Panc1 (cell line): ENCODE measurements at regions of chr2 and their contacts with region 1.

Region 1: GRCh38 chr2:202147775-202148174 is 74.7 kb downstream of the KIAA2012 start:
- DNase-seq: no peak
- ATAC-seq: peak; percentile 56; the same call in 1 of the 2 replicates
- H3K4me3 ChIP-seq: no peak overlapping the region
- H3K27ac ChIP-seq: no peak overlapping the region; the same call in 1 of the 2 replicates
- H3K4me1 ChIP-seq: peaks cover 23% of the 10 kb centered on the region; the same call in 1 of the 2 replicates
- H3K27me3 ChIP-seq: no peaks in the 10 kb centered on the region
- CTCF ChIP-seq: no peak

Region 2: GRCh38 chr2:201879996-201880395 is 267.8 kb before region 1 on chr2:
- CTCF ChIA-PET with region 1: no interaction called
- POLR2A ChIA-PET with region 1: interaction called, 10 read pairs
- in situ Hi-C with region 1: no loop called
- intact Hi-C with region 1: no loop called
- DNase-seq: no peak
- ATAC-seq: no peak
- H3K4me3 ChIP-seq: no peak overlapping the region
- H3K27ac ChIP-seq: no peak overlapping the region; the same call in 1 of the 2 replicates
- H3K4me1 ChIP-seq: peaks cover 17% of the 10 kb centered on the region; the same call in 1 of the 2 replicates
- H3K27me3 ChIP-seq: no peaks in the 10 kb centered on the region
- CTCF ChIP-seq: no peak

Region 3: DNA sequence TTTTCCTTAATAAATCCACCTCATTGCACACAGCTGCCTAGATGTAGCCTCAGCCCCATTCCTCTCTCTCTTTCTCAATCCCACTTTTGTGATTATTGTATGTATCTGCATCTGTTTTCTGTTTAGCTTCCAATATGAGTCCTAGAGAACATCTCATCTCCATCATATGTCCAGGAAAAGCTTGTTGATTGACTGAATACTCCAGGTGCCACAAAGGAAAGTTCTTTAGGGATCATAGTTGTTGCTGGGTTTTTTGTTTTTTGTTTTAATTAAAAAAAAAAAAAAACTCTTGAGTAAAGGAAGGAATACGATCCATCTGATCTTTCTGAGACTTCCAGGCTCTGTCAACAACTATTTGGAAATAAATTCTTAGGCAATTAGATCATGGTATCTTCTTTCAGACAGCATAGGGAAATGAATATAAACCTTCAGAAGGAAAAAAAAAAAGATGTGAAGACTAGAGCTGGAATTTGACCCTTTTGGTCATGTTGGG is 32.2 kb before region 1 on chr2:
- CTCF ChIA-PET with region 1: no interaction called
- POLR2A ChIA-PET with region 1: no interaction called
- in situ Hi-C with region 1: no loop called
- intact Hi-C with region 1: no loop called
- DNase-seq: no peak
- ATAC-seq: no peak
- H3K4me3 ChIP-seq: no peak overlapping the region
- H3K27ac ChIP-seq: no peak overlapping the region
- H3K4me1 ChIP-seq: no peaks in the 10 kb centered on the region
- H3K27me3 ChIP-seq: peaks cover 4% of the 10 kb centered on the region; the same call in 1 of the 2 replicates
- CTCF ChIP-seq: no peak